ENCODE measurements at regions of chr20 and their contacts with region 1.

Region 1: DNA sequence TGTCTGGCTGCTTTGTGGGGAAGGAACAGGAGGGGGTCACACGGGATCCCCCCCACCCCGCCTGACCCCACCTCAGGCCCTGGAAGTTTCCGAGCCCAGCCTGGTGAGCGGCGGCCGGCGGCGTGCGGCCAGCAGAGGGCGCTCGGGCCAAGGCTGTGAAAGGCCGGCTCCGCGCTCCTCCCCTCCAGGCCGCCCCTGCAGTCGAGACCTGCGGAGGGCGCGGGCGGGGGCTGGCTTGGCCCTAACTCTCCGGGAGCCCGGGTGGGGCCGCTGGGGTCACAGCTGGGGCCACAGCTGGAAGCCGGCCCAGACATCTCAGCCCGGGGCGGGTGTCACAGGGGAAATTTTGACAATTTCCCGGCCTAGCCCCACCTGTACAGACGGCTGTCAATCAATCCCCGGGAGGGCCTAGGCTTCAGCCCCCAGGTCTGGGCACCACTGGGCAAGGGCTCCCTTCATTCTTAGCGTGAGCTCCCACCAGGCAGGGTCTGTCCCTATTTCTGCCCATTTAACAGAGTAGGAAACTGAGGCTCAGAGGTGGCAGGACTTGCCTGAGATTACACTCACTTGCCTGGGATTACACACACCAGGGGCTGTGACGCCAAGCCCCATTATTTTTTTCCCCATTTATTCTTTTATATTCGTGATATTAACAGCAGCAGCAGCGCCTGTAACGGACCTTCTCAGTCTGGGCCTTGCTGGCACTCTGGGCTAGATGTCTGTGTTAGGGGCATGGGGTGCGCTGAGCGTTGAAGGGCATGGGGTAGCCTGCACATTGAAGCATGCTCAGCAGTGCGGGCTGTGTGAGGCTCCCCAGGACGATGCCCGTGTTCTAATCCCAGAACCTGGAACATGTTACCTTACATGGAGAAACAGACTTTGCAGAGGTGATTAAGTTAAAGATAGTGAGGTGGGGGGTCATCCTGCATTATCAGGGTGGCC is 23.0 kb downstream of the ZBP1 start:
- DNase-seq: peak; percentile 77
- ATAC-seq: peak; percentile 89
- H3K4me3 Mint-ChIP-seq: no peak overlapping the region
- H3K27ac Mint-ChIP-seq: no peak overlapping the region
- H3K4me1 Mint-ChIP-seq: peaks cover 14% of the 10 kb centered on the region
- H3K27me3 Mint-ChIP-seq: peaks cover 14% of the 10 kb centered on the region

Region 2: DNA sequence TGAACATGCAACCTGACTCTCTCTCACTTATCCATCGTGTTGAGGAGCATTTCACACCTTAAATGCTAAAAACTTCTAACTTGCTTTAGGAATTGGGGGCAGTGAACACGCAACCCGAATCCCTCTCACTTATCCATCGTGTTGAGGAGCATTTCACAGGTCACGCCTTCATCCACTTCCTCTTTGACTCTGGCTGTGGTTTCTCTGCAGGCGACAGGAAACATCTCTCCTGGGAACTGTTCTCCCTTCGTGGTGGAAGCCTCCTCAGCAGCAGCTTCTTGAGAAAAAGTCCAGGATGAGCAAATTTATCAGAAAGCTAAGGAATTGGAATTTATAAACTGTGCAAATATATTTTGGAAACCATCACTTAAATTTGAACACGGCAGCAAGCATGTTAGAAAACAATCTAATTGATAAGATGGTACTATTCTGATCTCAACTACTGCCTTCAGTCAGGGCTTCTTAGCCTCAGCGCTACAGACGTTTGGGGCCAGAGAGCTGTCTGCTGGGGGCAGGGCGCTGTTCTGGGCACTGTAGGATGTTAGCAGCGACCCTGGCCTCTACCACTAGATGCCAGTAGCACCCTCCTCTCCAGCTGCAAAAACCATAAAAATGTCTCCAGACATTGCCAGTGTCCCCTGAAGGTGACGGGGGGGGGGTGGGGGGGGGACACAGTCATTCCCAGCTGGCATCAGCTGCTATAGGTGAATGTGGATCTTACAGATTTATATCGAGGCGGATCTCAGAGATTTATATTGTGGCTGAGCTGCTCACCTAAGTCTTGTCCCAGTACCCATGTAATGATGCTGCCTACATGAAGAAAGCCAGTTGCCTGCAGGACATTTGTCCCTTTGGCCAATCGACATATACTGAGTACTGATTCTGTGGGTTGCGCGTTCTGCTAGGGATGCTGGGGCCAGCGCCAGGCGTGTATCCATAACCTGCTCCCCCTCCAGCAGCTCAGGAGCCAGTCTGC is 98.6 kb before region 1 on chr20:
- CTCF ChIA-PET with region 1: interaction called, 13 read pairs
- POLR2A ChIA-PET with region 1: no interaction called
- DNase-seq: peak; percentile 61
- ATAC-seq: peak; percentile 73
- H3K4me3 Mint-ChIP-seq: no peak overlapping the region
- H3K27ac Mint-ChIP-seq: no peak overlapping the region
- H3K4me1 Mint-ChIP-seq: peaks cover 12% of the 10 kb centered on the region
- H3K27me3 Mint-ChIP-seq: peaks cover 49% of the 10 kb centered on the region

Region 3: DNA sequence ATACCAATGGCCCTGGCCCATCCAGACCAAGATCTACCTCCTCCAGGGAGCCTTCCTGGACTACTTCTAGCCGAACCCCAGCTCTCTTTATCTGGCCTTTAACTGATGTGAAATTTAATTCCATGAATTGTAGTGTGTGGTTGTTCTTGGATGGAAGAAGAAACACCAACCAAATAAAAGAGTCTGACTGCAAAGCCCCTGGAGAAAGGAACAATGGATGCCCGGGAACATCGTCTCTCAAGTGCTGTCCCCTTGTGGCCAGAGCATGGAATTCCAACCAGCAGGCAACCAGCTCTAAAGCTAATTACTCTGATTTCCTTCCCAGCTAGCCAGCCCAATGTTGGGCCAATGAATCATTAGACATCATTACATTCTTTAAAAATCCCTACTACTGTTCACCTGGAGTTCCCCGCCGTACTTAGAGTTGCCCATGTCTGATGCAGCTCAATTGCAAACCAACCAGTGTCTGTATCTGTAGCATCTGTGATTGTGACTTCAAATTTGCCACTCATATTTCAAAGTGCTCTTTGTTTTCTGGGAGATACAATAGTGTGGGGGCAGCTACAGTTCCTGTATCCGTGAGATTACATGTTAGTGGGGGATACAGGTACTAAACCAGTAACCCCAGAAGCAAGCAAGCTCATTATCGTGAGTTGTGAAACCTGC is 490.1 kb after region 1 on chr20:
- CTCF ChIA-PET with region 1: interaction called, 14 read pairs
- POLR2A ChIA-PET with region 1: no interaction called
- DNase-seq: peak; percentile 30
- ATAC-seq: no peak
- H3K4me3 Mint-ChIP-seq: no peak overlapping the region
- H3K27ac Mint-ChIP-seq: no peak overlapping the region
- H3K4me1 Mint-ChIP-seq: no peaks in the 10 kb centered on the region
- H3K27me3 Mint-ChIP-seq: no peaks in the 10 kb centered on the region

Region 4: DNA sequence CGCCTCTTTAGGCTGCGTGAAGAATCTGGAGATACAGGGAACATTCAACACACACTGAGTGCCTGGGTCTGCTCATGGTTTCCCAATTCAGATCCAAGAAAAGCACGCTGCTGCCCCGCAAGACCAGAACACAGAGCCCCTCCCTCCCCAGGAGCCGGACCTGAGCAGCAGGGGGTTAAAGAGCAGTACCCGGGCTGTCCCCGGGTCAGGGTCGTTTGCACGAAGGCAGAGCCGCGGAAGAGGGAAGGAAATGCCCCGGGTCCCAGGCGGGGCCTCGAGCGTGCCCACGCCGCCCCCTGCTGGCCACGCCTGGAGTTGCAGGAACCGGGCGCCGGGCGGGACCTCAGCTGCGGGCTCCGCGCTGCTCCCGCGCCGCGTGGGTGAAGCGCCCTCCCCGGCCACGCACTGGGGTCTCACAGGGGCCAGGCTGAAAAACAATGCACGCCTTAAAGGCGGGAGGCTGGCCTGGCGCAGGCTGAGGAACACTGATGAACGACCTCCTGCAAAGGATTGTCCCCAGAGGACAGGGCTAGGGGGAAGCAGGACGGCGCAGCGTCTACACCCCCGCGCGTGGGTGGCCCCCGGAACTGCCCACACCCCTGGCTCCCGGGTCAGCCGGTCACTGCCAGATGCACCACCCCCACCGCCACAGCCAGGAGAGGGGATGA is 582.3 kb after region 1 on chr20:
- CTCF ChIA-PET with region 1: interaction called, 12 read pairs
- POLR2A ChIA-PET with region 1: no interaction called
- DNase-seq: peak; percentile 66
- ATAC-seq: peak; percentile 89
- H3K4me3 Mint-ChIP-seq: peak overlapping the region; percentile 51
- H3K27ac Mint-ChIP-seq: no peak overlapping the region
- H3K4me1 Mint-ChIP-seq: peaks cover 6% of the 10 kb centered on the region
- H3K27me3 Mint-ChIP-seq: peaks cover 7% of the 10 kb centered on the region

Measured in activated CD8-positive, alpha-beta T cell treated with anti-CD3 and anti-CD28 coated beads, Interleukin-2, amount 10 ng/mL, durations not matched to agents 7 days and 5 days (primary cell).